ENCODE measurements at regions of chr10 and their contacts with region 1.

Region 1: DNA sequence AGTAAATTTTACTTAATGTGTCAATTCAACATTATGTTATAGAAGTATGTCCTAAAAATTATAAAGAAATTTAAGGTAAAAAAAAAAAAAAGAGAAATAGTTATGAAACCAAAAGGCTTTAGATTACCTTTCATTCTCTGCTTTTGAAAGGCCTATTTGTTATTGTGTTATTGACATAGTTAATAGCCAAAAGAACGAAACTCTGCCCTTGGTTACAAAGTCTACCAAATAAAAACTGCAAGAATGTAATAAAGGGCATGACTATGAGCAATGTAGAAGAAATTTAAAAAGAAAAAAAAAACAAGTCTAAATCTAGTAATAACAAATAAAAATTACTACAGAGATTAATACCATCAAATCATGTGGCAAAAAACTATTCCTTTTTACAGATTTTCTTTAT is 10.6 kb downstream of the ACBD5 start:
- DNase-seq: no peak
- H3K4me3 ChIP-seq: no peak overlapping the region
- H3K27ac ChIP-seq: no peak overlapping the region
- H3K4me1 ChIP-seq: peaks cover 0 to 11% of the 10 kb centered on the region in 2 donors
- H3K27me3 ChIP-seq: no peaks in the 10 kb centered on the region
- CTCF ChIP-seq: no peak
- POLR2A ChIP-seq: no peak

Region 2: GRCh38 chr10:27041196-27041595 is 188.8 kb before region 1 on chr10:
- intact Hi-C with region 1: no loop called
- DNase-seq: no peak
- H3K4me3 ChIP-seq: no peak overlapping the region
- H3K27ac ChIP-seq: no peak overlapping the region
- H3K4me1 ChIP-seq: no peaks in the 10 kb centered on the region
- H3K27me3 ChIP-seq: no peaks in the 10 kb centered on the region
- CTCF ChIP-seq: no peak
- POLR2A ChIP-seq: no peak

Region 3: GRCh38 chr10:27155066-27155754 is 74.8 kb before region 1 on chr10 and contains the start of gene MASTL:
- intact Hi-C with region 1: loop called in 1 of 2 experiments (anchors 5 kb)
- DNase-seq: peak; percentile 92 to 96 (median 94)
- H3K4me3 ChIP-seq: peak within 1 kb of the TSS; percentile 66 to 95 (median 78)
- H3K27ac ChIP-seq: peak within 1 kb of the TSS; percentile 84 to 100 (median 98)
- H3K4me1 ChIP-seq: peaks cover 11 to 24% of the 10 kb centered on the region in 2 donors
- H3K27me3 ChIP-seq: no peaks in the 10 kb centered on the region
- CTCF ChIP-seq: no peak
- POLR2A ChIP-seq: peak; percentile 94 to 96
- total RNA-seq, gene MASTL: 3.7 to 13.4 (median 6.6) TPM

Measured in adrenal gland (tissue), 19 donors.